WTC11 (cell line): ENCODE measurements at regions of chr10 and their contacts with region 1.

Region 1: DNA sequence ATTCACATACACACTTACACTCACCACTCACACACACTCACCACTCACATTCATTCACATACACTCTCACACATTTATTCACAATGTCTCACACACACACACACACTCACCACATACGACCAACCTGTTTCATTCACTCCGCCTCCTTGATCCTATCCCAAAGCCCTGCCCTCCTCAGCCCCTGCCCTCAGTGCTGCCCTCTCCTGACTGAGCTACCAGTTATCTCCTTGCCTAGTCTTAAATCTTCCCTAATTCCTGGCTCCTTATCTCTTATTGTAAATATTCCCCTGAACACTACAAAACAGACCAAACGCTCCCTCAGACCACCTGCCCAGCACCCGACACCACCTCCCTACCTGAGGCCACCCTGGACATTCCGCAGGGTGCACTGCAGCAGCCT is 26.1 kb upstream of the C10orf120 start:
- DNase-seq: peak; percentile 51
- ATAC-seq: peak; percentile 94
- H3K4me3 Mint-ChIP-seq: no peak overlapping the region
- H3K27ac Mint-ChIP-seq: no peak overlapping the region
- H3K4me1 Mint-ChIP-seq: no peaks in the 10 kb centered on the region
- H3K27me3 Mint-ChIP-seq: no peaks in the 10 kb centered on the region
- CTCF ChIP-seq: no peak

Region 2: GRCh38 chr10:122953827-122954730 is 228.3 kb after region 1 on chr10 and contains the start of gene C10orf88:
- CTCF ChIA-PET with region 1: no interaction called
- POLR2A ChIA-PET with region 1: no interaction called
- DNase-seq: peak; percentile 96
- ATAC-seq: peak; percentile 99
- H3K4me3 Mint-ChIP-seq: peak within 1 kb of the TSS; percentile 73
- H3K27ac Mint-ChIP-seq: no peak within 1 kb of the TSS
- H3K4me1 Mint-ChIP-seq: peaks cover 11% of the 10 kb centered on the region
- H3K27me3 Mint-ChIP-seq: peaks cover 45% of the 10 kb centered on the region
- CTCF ChIP-seq: no peak
- total RNA-seq, gene C10orf88: 6.4 to 7.7 TPM (median 6.5 TPM) in 3 replicates

Region 3: GRCh38 chr10:122980209-122981065 is 254.7 kb after region 1 on chr10 and contains the start of gene PSTK:
- CTCF ChIA-PET with region 1: interaction called, 11 read pairs
- POLR2A ChIA-PET with region 1: no interaction called
- DNase-seq: peak; percentile 87
- ATAC-seq: peak; percentile 98
- H3K4me3 Mint-ChIP-seq: peak within 1 kb of the TSS; percentile 81
- H3K27ac Mint-ChIP-seq: peak within 1 kb of the TSS; percentile 96
- H3K4me1 Mint-ChIP-seq: peaks cover 13% of the 10 kb centered on the region
- H3K27me3 Mint-ChIP-seq: peaks cover 5% of the 10 kb centered on the region; the same call in 1 of the 2 replicates
- CTCF ChIP-seq: peak; percentile 77
- total RNA-seq, gene PSTK: 4.0 to 6.2 TPM (median 5.6 TPM) in 3 replicates